ENCODE measurements at regions of chr5 and their contacts with region 1.

Region 1: DNA sequence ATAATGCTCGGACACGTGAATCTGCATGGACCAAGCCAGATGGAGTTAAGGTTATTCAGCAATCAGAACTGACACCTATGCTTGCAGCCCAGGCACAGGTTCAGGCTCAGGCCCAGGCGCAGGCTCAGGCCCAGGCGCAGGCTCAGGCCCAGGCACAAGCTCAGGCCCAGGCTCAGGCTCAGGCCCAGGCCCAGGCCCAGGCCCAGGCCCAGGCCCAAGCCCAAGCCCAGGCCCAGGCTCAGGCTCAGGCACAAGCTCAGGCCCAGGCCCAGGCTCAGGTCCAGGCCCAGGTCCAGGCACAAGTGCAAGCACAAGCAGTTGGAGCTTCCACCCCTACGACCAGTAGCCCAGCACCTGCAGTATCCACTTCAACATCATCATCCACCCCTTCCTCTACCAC is 11.8 kb downstream of the TCERG1 start:
- DNase-seq: no peak
- H3K4me3 ChIP-seq: no peak overlapping the region
- H3K27ac ChIP-seq: no peak overlapping the region
- H3K4me1 ChIP-seq: peaks cover 0 to 29% (median 8%) of the 10 kb centered on the region in 4 donors
- H3K27me3 ChIP-seq: no peaks in the 10 kb centered on the region
- CTCF ChIP-seq: no peak
- EP300 ChIP-seq: no peak
- POLR2A ChIP-seq: no peak

Region 2: DNA sequence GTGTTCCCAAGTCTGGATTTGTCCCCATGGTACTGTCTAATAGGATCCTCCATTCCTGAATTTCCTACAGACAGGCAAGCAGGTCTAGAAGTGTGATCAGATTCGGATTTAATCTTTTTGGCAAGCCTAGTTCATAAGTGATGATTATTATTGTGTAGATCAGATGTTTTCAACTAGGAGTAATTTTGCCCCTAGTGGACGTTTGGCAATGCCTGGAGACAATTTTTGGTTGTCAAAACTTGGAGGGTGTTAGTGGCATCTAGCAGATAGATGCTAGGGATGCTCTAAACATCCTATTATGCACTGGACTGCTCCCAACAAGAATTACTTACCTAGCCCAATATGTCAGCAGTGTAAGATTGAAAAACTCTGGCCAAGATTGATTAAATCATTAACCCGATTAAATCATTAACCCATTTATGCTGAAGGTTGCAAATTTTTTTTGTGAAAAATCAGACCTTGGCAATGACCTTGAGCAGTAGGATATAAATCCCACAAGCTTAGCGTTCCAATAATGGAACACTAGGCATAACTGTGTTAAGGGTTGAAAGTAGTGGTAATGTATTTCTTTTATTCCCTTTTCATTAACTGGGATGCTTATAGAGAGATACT is 16.4 kb after region 1 on chr5:
- in situ Hi-C with region 1: no loop called
- intact Hi-C with region 1: loop called (anchors 1 kb)
- DNase-seq: no peak
- H3K4me3 ChIP-seq: no peak overlapping the region
- H3K27ac ChIP-seq: no peak overlapping the region
- H3K4me1 ChIP-seq: no peaks in the 10 kb centered on the region
- H3K27me3 ChIP-seq: no peaks in the 10 kb centered on the region
- CTCF ChIP-seq: peak in 1 of 5 experiments; percentile 5
- EP300 ChIP-seq: no peak
- POLR2A ChIP-seq: no peak

Region 3: GRCh38 chr5:146507428-146507827 is 48.5 kb after region 1 on chr5:
- in situ Hi-C with region 1: no loop called
- intact Hi-C with region 1: no loop called
- DNase-seq: no peak
- H3K4me3 ChIP-seq: no peak overlapping the region
- H3K27ac ChIP-seq: no peak overlapping the region
- H3K4me1 ChIP-seq: peaks cover 0 to 2% (median 0%) of the 10 kb centered on the region in 4 donors
- H3K27me3 ChIP-seq: no peaks in the 10 kb centered on the region
- CTCF ChIP-seq: no peak
- EP300 ChIP-seq: no peak
- POLR2A ChIP-seq: no peak

Measured in transverse colon (tissue), 4 donors.